GM10248 (cell line): ENCODE measurements at regions of chr12 and their contacts with region 1.

Region 1: DNA sequence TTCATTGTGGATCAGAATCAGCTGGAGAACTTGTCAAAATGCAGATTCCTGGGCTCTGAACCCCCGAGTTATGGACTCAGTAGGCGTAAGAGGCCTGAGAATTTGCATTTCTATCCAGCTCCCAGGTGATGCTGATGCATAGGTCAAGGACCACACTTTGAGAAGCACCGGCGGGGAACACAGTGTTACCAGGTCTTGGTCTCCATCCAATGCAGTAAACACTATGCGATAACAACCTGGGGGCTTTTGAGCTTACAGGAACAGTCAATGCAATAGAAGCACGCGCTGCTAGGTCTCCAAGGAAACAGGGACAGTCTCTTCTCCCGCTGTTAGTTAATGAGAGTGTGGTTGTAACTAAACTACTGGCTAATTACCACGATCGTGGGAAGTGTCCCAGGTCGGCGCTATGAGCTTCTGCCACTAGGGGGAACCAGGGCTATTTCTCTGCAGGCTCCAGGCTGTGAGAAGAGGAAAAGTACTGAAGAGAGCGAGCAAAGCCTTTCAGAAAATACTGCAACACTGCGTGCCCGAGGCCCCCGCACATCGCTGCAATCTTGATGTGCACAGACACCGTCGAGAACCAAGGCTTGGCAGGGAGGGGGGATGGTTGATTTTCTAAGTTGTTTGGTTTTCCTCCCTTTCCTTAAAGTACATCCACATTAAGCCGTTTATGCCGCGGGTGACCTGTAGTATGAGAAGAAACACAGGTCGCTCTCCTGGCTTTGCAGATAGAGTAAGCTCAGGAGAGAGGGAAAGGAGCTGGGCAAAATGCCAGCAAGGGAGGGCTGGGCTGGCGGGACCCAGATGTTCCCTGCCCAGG is 52.0 kb upstream of the KCNA1 start:
- DNase-seq: peak; percentile 79
- CTCF ChIP-seq: peak; percentile 94

Region 2: DNA sequence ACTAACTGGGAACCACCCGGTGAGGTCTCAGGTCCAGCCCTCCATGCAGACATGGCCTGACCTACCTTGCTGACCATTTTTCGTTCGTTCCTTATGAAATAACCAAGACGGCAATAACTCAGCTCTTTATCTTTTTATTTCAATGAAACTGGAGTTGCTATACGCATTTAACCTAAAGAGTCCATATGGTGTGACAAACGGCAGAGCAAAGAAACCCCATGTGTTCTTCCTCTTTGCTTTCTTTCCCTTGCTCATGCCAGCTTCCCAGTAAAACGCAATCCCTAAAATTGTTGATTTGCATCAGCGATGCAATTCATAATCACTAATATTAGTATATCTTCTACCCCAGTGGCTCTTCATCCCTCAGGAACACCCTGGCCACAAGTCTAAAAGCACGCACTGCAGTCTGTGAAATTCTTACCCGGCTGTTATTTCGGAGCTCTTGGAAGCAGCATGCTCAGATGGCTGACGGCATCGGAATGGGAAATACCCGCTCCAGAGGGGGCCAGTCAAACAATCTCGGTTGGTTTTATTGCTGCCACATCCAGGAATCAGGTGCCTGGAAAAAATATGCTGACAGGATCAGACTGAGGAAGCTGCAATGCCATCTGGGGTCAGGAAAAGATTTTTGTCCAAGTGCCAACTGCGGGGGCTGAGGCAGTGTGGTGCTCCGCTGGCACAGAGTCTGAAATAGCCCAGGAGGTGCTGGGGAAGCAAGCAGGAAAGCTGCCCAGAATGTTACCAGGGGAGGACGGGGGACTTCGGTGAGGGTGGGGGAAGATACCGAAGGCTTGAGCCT is 23.8 kb after region 1 on chr12:
- CTCF ChIA-PET with region 1: interaction called, 22 read pairs
- POLR2A ChIA-PET with region 1: no interaction called
- DNase-seq: no peak
- CTCF ChIP-seq: no peak

Region 3: DNA sequence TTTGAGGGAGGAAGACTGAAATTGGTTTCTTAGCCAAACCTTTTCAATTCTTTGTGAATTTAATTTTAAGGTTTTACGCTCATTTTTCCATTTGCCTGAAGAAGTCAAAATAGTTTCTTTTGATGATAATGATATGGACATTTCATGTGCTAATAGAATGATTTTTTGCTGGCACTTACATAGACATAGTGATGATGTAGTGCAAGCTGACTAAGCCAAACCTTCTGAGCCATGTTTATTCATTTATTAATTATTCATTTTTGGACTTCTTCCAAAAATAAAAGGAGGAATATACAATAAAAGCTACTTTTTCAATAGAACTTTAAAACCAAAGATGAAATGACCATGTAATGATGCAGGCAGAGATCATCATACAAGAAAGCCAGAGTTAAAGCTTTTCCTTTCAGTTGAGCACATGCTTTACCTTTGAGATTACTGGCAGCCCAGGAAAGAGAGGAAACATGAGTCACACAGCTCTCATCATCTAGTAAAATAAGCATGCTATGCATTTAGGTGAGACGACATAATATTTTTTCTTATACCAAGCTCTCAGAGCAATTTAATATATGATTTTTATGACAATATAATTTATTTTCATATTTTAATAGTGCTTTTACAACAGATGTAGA is 76.8 kb after region 1 on chr12:
- CTCF ChIA-PET with region 1: interaction called, 19 read pairs
- POLR2A ChIA-PET with region 1: no interaction called
- DNase-seq: no peak
- CTCF ChIP-seq: no peak

Region 4: GRCh38 chr12:4979737-4980136 is 122.1 kb after region 1 on chr12:
- CTCF ChIA-PET with region 1: interaction called, 198 read pairs
- POLR2A ChIA-PET with region 1: no interaction called
- DNase-seq: no peak
- CTCF ChIP-seq: no peak

Region 5: GRCh38 chr12:5013266-5013730 is 155.6 kb after region 1 on chr12:
- CTCF ChIA-PET with region 1: interaction called, 14 read pairs
- POLR2A ChIA-PET with region 1: no interaction called
- DNase-seq: no peak
- CTCF ChIP-seq: no peak

Region 6: DNA sequence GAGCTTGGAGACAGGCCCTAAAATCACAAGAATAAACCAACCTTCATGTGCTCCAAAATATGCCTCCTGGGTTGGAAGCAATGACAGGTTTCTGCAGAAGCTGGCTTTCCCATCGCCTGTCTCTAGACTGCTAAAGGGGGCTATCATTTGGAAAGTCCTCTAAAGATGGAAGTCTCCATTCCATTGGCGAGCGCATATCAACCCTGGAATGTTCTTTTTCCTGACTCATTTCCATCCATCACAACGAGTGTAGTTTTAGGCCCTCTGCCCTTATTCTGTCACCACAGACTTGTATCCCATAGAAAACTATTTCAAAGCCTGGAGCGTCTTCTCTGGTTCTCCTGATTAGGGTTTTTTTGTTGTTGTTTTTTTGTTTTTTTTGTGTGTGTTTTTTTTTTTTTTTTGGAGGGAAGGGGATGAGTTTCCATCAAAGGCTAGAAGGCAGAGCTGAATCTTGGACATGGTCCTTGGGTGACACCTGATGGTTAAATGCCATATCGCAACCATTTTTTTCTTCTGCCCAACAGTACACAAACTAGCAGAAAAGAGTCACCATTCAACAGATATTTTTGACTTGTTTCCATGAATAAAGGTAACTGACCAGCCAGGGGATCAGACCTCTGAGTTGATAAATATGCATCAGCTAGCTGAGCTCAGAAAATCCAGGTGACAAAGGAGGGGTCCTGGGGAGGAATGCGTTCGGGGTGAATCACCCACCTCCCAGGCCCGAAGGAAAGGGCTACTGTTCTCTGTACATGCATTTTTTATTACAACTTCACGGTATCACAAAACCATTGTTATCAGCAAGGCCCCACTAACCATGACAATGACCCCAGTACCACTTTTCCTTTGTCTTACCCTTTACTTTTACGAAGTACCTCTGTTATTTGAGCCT is 226.5 kb after region 1 on chr12:
- CTCF ChIA-PET with region 1: interaction called, 69 read pairs
- POLR2A ChIA-PET with region 1: no interaction called
- DNase-seq: peak; percentile 73
- CTCF ChIP-seq: peak; percentile 75